ENCODE measurements at regions of chr6 and their contacts with region 1.

Region 1: GRCh38 chr6:99568103-99568933 is at the start of gene CCNC:
- DNase-seq: peak; percentile 82
- ATAC-seq: peak; percentile 96
- H3K4me3 Mint-ChIP-seq: peak within 1 kb of the TSS; percentile 99
- H3K27ac Mint-ChIP-seq: peak within 1 kb of the TSS; percentile 93
- H3K4me1 Mint-ChIP-seq: peaks cover 32% of the 10 kb centered on the region
- H3K27me3 Mint-ChIP-seq: no peaks in the 10 kb centered on the region
- CTCF ChIP-seq: no peak
- total RNA-seq, gene CCNC: 50.4 and 51.6 TPM in 2 replicates

Region 2: GRCh38 chr6:99241905-99242534 is 326.3 kb before region 1 on chr6:
- CTCF ChIA-PET with region 1: no interaction called
- POLR2A ChIA-PET with region 1: no interaction called
- intact Hi-C with region 1: no loop called
- DNase-seq: no peak
- ATAC-seq: no peak
- H3K4me3 Mint-ChIP-seq: no peak overlapping the region
- H3K27ac Mint-ChIP-seq: no peak overlapping the region
- H3K4me1 Mint-ChIP-seq: no peaks in the 10 kb centered on the region
- H3K27me3 Mint-ChIP-seq: no peaks in the 10 kb centered on the region
- CTCF ChIP-seq: no peak

Region 3: DNA sequence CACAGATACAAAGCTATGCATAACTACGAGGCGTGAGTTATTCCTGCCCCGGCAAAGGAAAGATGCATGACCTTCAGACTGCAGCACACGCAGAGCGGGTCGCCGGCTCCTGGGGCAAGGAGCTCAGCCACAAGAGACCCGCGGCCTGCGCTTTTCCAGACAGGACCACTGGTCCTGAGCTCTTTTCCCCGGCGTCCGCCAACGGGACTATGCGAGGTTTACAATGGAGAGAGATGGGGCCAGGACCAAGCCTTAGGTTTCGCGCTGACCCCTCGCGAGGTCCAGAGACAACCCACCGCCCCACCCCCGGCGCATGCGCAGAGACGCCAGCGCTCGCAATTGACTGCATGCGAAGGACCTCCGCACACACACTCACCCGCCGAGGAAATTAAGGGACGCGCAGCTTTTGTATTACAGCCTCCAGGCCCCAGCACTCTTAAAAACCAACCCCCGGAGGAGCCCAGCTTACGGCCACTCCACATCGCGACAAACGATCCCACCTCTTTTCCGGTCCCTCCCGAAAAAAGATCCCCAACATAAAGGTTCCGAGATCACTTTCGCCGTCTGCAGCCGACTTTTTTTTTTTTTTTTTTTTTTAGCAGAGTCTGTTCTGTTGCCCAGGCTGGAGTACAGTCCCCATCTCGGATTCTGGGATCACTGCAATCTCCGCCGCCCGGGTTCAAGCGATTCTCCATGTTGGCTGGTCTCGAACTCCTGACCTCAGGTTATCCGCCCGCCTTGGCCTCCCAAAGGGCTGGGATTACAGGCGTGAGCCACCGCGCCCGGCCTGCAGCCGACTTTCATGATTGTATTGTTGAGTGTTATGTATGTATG is 174.4 kb before region 1 on chr6 and contains the start of gene COQ3:
- CTCF ChIA-PET with region 1: no interaction called
- POLR2A ChIA-PET with region 1: interaction called, 11 read pairs
- intact Hi-C with region 1: no loop called
- DNase-seq: peak; percentile 71
- ATAC-seq: peak; percentile 79
- H3K4me3 Mint-ChIP-seq: peak within 1 kb of the TSS; percentile 97
- H3K27ac Mint-ChIP-seq: peak within 1 kb of the TSS; percentile 89
- H3K4me1 Mint-ChIP-seq: peaks cover 13% of the 10 kb centered on the region
- H3K27me3 Mint-ChIP-seq: no peaks in the 10 kb centered on the region
- CTCF ChIP-seq: no peak
- total RNA-seq, gene COQ3: 4.8 and 5.6 TPM in 2 replicates

Region 4: GRCh38 chr6:99485395-99485773 is 82.9 kb before region 1 on chr6:
- CTCF ChIA-PET with region 1: no interaction called
- POLR2A ChIA-PET with region 1: interaction called, 29 read pairs
- intact Hi-C with region 1: loop called (anchors 1 kb)
- DNase-seq: no peak
- ATAC-seq: peak; percentile 26
- H3K4me3 Mint-ChIP-seq: peak overlapping the region; percentile 35
- H3K27ac Mint-ChIP-seq: peak overlapping the region; percentile 89
- H3K4me1 Mint-ChIP-seq: peaks cover 26% of the 10 kb centered on the region
- H3K27me3 Mint-ChIP-seq: no peaks in the 10 kb centered on the region
- CTCF ChIP-seq: no peak

Region 5: DNA sequence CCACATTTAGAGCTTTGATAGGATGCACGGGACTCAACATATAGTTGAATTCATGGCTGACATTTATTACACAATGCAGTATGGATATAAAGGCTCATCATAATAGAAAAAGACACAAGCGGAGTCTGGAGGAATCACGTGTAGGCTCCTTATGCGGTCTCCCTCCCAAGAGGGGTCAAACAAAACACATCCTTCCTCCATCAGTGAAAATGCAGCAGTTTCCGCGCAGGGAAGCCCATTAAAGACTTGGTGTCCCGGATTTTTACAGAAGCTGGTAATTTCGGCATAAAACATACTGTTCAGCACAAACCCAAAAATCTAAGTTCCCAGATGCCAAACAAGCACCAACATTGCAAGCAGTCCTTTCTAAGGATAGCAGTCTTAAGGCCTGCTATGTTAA is 54.2 kb before region 1 on chr6:
- CTCF ChIA-PET with region 1: no interaction called
- POLR2A ChIA-PET with region 1: interaction called, 27 read pairs
- intact Hi-C with region 1: loop called (anchors 1 kb)
- DNase-seq: no peak
- ATAC-seq: no peak
- H3K4me3 Mint-ChIP-seq: peak overlapping the region; percentile 89
- H3K27ac Mint-ChIP-seq: peak overlapping the region; percentile 84
- H3K4me1 Mint-ChIP-seq: peaks cover 34% of the 10 kb centered on the region
- H3K27me3 Mint-ChIP-seq: no peaks in the 10 kb centered on the region
- CTCF ChIP-seq: no peak

Region 6: GRCh38 chr6:99520855-99521632 is 47.3 kb before region 1 on chr6:
- CTCF ChIA-PET with region 1: no interaction called
- POLR2A ChIA-PET with region 1: interaction called, 27 read pairs
- intact Hi-C with region 1: loop called (anchors 1 kb)
- DNase-seq: peak; percentile 71
- ATAC-seq: peak; percentile 86
- H3K4me3 Mint-ChIP-seq: peak overlapping the region; percentile 99
- H3K27ac Mint-ChIP-seq: peak overlapping the region; percentile 97
- H3K4me1 Mint-ChIP-seq: peaks cover 41% of the 10 kb centered on the region
- H3K27me3 Mint-ChIP-seq: no peaks in the 10 kb centered on the region
- CTCF ChIP-seq: peak; percentile 33

Region 7: GRCh38 chr6:99588618-99589289 is 20.4 kb after region 1 on chr6:
- CTCF ChIA-PET with region 1: interaction called, 4 read pairs
- POLR2A ChIA-PET with region 1: interaction called, 12 read pairs
- intact Hi-C with region 1: loop called (anchors 2 kb)
- DNase-seq: peak; percentile 38
- ATAC-seq: peak; percentile 83
- H3K4me3 Mint-ChIP-seq: peak overlapping the region; percentile 86
- H3K27ac Mint-ChIP-seq: peak overlapping the region; percentile 46
- H3K4me1 Mint-ChIP-seq: peaks cover 30% of the 10 kb centered on the region
- H3K27me3 Mint-ChIP-seq: peaks cover 56% of the 10 kb centered on the region
- CTCF ChIP-seq: no peak

Region 8: DNA sequence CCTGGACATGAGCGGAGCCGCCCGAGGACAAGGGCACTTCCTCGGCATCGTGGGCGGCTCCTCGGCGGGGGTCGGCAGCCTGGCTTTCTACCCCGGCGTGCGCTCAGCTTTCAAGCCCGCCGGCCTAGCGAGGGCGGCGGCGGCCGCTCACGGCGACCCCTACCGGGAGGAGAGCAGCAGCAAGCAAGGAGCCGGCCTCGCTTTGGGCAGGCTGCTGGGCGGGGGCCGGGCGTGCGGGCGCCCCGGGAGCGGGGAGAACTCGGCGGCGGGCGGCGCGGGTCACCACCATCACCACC is 45.0 kb after region 1 on chr6:
- CTCF ChIA-PET with region 1: no interaction called
- POLR2A ChIA-PET with region 1: no interaction called
- intact Hi-C with region 1: loop called (anchors 1 kb)
- DNase-seq: peak; percentile 47
- ATAC-seq: peak; percentile 83
- H3K4me3 Mint-ChIP-seq: peak overlapping the region; percentile 75
- H3K27ac Mint-ChIP-seq: no peak overlapping the region
- H3K4me1 Mint-ChIP-seq: peaks cover 17% of the 10 kb centered on the region
- H3K27me3 Mint-ChIP-seq: peaks cover 72% of the 10 kb centered on the region
- CTCF ChIP-seq: no peak

Measured in activated B cell treated with CpG ODN at 0.5 μM for 24 hours (primary cell).